ENCODE measurements at regions of chr10 and their contacts with region 1.

Region 1: DNA sequence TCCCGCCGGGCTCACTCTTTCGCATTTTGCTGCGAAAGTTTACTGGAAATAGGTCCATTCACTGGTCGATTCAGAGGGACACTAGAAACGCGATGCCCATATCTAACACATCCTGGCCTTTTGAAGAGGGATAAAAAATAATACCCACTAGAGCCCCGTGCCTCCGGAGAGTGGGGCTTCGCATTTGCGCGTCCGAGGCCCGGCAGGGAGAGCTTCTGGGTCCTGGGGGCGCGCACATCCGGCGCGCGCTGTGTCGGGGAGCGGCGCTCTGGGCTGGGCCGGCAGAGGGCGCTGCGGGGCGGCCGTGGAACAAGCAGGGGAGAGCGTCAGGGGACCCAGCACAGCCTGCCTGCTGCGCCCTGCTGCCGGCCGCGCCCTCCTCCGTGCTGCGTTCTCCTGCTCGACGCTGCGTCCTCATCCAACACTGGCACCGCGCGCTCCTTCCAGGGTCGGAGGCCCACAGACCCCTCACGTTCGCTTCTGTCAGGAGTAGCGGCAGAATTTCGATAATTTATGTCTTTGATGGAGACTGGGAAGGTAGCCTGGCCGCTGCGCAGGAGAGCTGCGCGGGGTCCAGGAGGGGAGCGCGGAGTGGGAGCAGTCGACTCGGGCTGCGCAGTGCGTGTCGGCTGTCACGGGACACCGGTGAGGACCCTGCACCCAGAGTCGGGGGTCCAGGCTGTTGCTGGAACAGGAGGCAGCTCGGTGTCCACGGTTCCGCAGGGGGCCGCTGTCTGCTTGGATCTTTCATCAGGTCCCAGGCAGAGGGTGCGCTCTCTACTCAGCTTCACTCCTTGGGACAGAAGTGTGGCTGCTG is 41.5 kb upstream of the ZNF32 start:
- DNase-seq: peak; percentile 93
- ATAC-seq: peak; percentile 96

Region 2: GRCh38 chr10:44046605-44047004 is 356.4 kb after region 1 on chr10:
- intact Hi-C with region 1: loop called (anchors 10 kb)
- DNase-seq: no peak
- ATAC-seq: peak; percentile 31

Region 3: GRCh38 chr10:44310762-44311562 is 620.8 kb after region 1 on chr10:
- intact Hi-C with region 1: loop called (anchors 5 kb)
- DNase-seq: peak; percentile 94
- ATAC-seq: peak; percentile 95

Region 4: DNA sequence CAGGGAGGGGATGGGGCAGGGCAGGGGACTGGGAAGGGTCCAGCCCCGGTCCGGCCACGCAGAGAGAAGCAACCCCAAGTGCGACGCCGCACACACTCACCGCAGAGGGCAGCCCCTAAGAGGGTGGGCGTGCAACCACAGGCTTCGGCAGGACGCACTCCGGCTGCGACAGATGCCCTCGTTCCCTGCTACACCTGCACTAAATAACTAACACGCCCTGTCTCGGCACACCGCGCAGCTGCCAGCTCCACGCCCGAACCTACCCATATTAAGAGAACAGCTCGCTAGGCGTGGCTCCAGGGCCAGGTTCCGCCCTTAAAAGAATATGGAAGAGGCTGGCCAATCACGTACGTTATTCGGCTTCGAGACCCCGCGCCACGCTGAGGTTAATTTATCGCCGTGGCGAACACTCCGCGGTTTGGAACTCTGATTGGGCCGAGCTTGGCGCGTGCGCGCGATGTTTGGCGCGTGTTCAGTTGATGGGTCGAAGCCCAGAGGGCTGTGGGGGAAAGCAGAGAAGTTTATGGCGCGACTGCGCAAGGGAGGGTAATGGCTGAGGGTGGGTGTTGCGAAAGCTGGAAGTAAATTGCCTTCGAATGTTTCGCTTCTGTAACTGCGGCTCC is 1534.2 kb after region 1 on chr10:
- intact Hi-C with region 1: no loop called
- DNase-seq: peak; percentile 62
- ATAC-seq: peak; percentile 20